Activated B cell treated with CpG ODN at 0.5 μM for 24 hours (primary cell): ENCODE measurements at regions of chr4 and their contacts with region 1.

Region 1: DNA sequence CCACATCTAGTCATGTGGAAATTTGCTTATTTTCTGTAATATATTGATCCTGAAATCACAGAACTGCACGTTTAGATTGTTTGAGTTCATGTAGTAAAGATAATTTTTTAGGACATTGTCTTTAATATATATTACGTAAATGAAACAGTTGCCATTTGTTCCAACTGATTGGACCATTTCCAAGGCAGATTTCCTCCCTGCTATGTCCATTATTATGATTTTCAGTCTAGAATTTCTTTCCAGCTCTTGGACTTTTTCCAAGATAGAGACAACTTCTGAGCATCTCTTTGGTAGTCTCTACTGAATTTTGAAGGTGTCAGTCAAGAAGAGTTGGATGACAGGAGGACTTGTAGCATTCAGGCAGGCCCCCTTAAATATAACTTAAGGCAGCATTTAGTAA is 94.6 kb downstream of the STIM2 start:
- DNase-seq: no peak
- ATAC-seq: no peak
- H3K4me3 Mint-ChIP-seq: no peak overlapping the region
- H3K27ac Mint-ChIP-seq: no peak overlapping the region
- H3K4me1 Mint-ChIP-seq: peaks cover 41% of the 10 kb centered on the region
- H3K27me3 Mint-ChIP-seq: no peaks in the 10 kb centered on the region
- CTCF ChIP-seq: no peak

Region 2: DNA sequence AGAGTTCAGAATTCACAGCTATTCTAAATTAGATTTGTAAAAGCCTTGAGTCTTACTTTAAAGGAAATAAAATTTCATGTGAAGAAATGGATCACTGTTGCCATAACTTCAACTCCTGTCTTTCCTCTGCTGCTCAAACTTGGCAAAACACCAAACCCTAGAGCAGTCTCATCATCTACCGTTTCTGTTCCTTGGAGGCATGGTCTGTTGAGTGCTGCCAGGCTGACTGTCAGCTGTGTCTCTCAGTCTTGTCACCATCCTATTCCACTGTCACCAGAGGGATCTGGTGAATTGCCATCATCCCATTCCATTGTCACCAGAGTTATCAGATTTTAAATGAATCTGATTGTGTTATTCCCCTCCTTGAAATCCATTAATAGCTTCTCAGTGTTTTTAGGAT is 39.0 kb before region 1 on chr4:
- CTCF ChIA-PET with region 1: no interaction called
- POLR2A ChIA-PET with region 1: no interaction called
- intact Hi-C with region 1: loop called (anchors 5 kb)
- DNase-seq: no peak
- ATAC-seq: peak; percentile 49
- H3K4me3 Mint-ChIP-seq: no peak overlapping the region
- H3K27ac Mint-ChIP-seq: peak overlapping the region; percentile 31
- H3K4me1 Mint-ChIP-seq: peaks cover 55% of the 10 kb centered on the region
- H3K27me3 Mint-ChIP-seq: no peaks in the 10 kb centered on the region
- CTCF ChIP-seq: no peak

Region 3: DNA sequence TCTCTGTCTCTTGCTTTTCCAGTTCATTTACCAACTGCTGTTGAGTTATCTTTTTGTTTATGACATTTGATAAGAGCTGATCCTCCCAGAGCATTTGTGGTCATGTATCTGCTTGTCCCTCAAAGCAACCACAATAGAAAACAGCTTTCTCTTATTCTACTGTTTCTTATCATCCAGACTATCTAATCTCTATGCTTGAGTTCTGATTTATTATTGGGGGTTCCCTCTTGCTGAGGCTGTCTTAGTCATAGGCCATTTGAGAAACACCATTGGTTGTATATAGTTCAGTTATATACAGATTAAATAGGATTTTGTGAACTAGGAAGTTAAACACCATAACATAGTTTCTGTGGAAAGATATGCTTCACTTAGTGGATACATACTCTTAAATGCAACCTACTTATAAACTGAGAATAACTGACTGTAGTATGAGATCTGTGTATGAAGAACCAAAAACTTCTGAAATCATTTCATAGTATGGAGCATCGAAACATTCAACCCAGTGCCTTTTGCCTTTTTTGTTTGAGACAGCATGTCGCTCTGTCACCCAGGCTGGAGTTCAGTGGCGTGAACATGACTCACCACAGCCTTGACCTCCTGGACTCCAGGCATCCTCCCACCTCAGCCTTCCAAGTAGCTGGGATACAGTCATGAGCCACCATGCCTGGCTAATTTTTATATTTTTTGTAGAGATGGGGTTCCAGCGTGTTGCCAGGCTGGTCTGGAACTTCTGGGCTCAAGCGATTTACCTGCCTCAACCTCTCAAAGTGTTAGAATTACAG is 18.8 kb before region 1 on chr4:
- CTCF ChIA-PET with region 1: no interaction called
- POLR2A ChIA-PET with region 1: interaction called, 9 read pairs
- intact Hi-C with region 1: loop called (anchors 1 kb)
- DNase-seq: no peak
- ATAC-seq: no peak
- H3K4me3 Mint-ChIP-seq: no peak overlapping the region
- H3K27ac Mint-ChIP-seq: peak overlapping the region; percentile 46
- H3K4me1 Mint-ChIP-seq: peaks cover 68% of the 10 kb centered on the region
- H3K27me3 Mint-ChIP-seq: no peaks in the 10 kb centered on the region
- CTCF ChIP-seq: no peak

Region 4: DNA sequence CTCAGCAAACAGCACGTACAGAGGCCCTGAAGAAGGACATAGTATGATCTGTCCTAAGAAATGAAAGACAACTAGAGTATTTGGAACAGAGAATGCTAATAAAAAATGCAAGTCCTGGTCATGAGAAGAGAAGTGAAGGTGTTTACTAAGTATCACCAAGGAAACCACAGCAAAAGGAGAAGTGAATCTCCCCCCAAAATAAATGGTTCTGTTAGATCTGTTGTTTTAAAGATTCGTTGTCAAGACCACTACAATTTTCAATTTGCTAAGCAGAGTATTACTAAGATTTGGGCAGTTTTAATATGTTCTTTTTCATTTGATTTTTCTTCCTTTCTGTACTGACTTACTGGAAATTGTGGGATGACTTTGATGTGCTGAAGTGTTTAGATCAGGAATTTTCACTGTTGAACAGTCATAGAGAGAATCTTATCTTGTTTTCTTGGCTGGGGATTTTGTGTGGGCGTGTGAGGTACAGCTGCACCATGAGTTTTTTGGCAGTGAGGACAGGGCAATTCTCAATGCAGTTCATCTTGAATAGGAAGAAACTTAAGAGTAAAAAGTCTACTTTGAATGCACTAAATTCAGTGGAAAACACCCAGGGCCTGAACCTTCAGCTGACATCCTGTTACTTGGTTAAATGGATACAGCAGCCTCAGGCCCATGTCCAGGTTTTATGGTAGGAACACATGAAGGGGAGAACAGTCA is 37.6 kb after region 1 on chr4:
- CTCF ChIA-PET with region 1: no interaction called
- POLR2A ChIA-PET with region 1: no interaction called
- intact Hi-C with region 1: loop called (anchors 5 kb)
- DNase-seq: peak; percentile 26
- ATAC-seq: peak; percentile 80
- H3K4me3 Mint-ChIP-seq: no peak overlapping the region
- H3K27ac Mint-ChIP-seq: no peak overlapping the region
- H3K4me1 Mint-ChIP-seq: peaks cover 17% of the 10 kb centered on the region
- H3K27me3 Mint-ChIP-seq: no peaks in the 10 kb centered on the region
- CTCF ChIP-seq: no peak